ENCODE measurements at regions of chr12 and their contacts with region 1.

Region 1: GRCh38 chr12:8032242-8033152 is at the start of gene FOXJ2:
- DNase-seq: peak; percentile 87 to 89 (median 88)
- ATAC-seq: peak; percentile 86 to 96 (median 94)
- H3K4me3 ChIP-seq: peak within 1 kb of the TSS; percentile 70 to 98 (median 97)
- H3K27ac ChIP-seq: peak within 1 kb of the TSS; percentile 80 to 94 (median 93)
- H3K4me1 ChIP-seq: peaks cover 0 to 37% (median 8%) of the 10 kb centered on the region in 4 donors
- H3K27me3 ChIP-seq: no peaks in the 10 kb centered on the region
- CTCF ChIP-seq: no peak
- POLR2A ChIP-seq: peak; percentile 77
- total RNA-seq, gene FOXJ2: 4.4 to 5.7 (median 4.8) TPM

Region 2: GRCh38 chr12:7948589-7949260 is 83.8 kb before region 1 on chr12:
- intact Hi-C with region 1: no loop called
- DNase-seq: no peak
- ATAC-seq: peak in 2 of 4 donors; percentile 29 to 44
- H3K4me3 ChIP-seq: no peak overlapping the region
- H3K27ac ChIP-seq: no peak overlapping the region
- H3K4me1 ChIP-seq: no peaks in the 10 kb centered on the region
- H3K27me3 ChIP-seq: no peaks in the 10 kb centered on the region
- CTCF ChIP-seq: no peak
- POLR2A ChIP-seq: no peak

Region 3: GRCh38 chr12:8081251-8081920 is 48.9 kb after region 1 on chr12:
- intact Hi-C with region 1: loop called in 1 of 2 experiments (anchors 10 kb)
- DNase-seq: no peak
- ATAC-seq: peak; percentile 33 to 65 (median 38)
- H3K4me3 ChIP-seq: peak overlapping the region; percentile 81 to 95 (median 94)
- H3K27ac ChIP-seq: peak overlapping the region; percentile 89 to 94 (median 91)
- H3K4me1 ChIP-seq: peaks cover 0 to 19% (median 4%) of the 10 kb centered on the region in 4 donors
- H3K27me3 ChIP-seq: no peaks in the 10 kb centered on the region
- CTCF ChIP-seq: no peak
- POLR2A ChIP-seq: no peak

Measured in right lobe of liver (tissue), 6 donors.